ENCODE measurements at regions of chr1 and their contacts with region 1.

Region 1: GRCh38 chr1:61711969-61712368 is 13.0 kb downstream of the TM2D1 start:
- DNase-seq: no peak
- H3K4me3 ChIP-seq: no peak overlapping the region
- H3K27ac ChIP-seq: no peak overlapping the region
- H3K4me1 ChIP-seq: no peaks in the 10 kb centered on the region
- H3K27me3 ChIP-seq: no peaks in the 10 kb centered on the region
- CTCF ChIP-seq: no peak
- POLR2A ChIP-seq: no peak

Region 2: GRCh38 chr1:61641578-61642336 is 70.2 kb before region 1 on chr1:
- intact Hi-C with region 1: no loop called
- DNase-seq: peak; percentile 59 to 77
- H3K4me3 ChIP-seq: peak overlapping the region; percentile 20 to 29 (median 27)
- H3K27ac ChIP-seq: peak overlapping the region; percentile 45 to 57
- H3K4me1 ChIP-seq: peaks cover 4 to 7% of the 10 kb centered on the region in 2 donors
- H3K27me3 ChIP-seq: no peaks in the 10 kb centered on the region
- CTCF ChIP-seq: peak in 2 of 3 donors; percentile 61 to 72
- POLR2A ChIP-seq: no peak

Region 3: DNA sequence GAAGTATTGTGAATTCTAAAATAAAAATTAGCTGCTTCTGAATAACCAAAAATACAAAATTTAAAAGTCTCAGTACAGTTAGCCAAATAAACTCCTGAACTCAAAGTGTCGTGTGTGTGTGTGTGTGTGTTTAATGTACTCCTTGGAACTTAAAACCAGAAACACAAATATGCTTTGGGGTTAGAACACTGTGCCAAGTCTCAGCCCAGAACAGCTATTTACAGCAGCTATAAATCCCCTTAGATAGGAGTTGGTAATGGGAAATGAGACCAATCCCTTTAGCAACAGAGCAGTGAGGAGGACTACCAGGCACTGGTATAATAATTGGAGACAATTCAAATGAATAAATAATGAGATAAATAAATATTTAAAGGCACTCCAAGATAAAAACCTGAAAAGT is 113.4 kb after region 1 on chr1:
- intact Hi-C with region 1: loop called (anchors 2 kb)
- DNase-seq: no peak
- H3K4me3 ChIP-seq: no peak overlapping the region
- H3K27ac ChIP-seq: no peak overlapping the region
- H3K4me1 ChIP-seq: no peaks in the 10 kb centered on the region
- H3K27me3 ChIP-seq: no peaks in the 10 kb centered on the region
- CTCF ChIP-seq: no peak
- POLR2A ChIP-seq: no peak